Panc1 (cell line): ENCODE measurements at regions of chr22 and their contacts with region 1.

Region 1: DNA sequence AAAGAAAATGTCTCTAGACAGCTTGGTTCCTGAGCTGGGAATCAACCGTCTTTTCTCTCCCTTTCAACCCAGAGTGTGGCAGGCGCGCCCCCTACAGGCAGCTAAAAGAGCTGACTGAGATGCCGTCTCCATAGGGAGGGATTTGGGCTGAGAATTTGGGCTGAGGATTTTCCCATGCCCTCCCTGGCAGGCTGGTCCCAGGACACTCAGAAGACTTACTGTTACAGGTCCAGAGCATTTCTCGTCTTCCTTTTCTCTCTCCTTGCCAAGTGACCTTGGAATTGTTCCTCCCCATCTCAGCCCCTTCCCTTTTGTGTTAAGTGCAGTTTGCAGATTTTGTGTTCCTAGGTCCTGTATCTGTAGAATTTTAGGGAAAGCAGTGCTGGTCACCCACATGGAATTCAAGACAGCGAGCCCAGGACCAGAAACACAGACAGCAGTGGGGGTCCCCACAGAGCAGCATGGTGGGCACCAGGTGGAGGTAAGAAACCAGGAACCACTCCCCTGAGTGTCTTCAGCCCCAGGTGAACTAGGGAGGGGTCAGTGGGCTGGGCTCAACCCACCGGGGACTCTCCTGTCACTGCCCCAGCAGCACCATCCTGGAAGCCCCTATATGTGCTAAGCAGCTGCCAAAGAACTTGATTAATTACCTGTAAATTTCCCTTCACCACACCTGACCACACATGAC is 9.9 kb upstream of the IGLL5 start:
- DNase-seq: no peak
- ATAC-seq: peak; percentile 66; the same call in 1 of the 2 replicates
- H3K4me3 ChIP-seq: no peak overlapping the region
- H3K27ac ChIP-seq: no peak overlapping the region
- H3K4me1 ChIP-seq: no peaks in the 10 kb centered on the region
- H3K27me3 ChIP-seq: no peaks in the 10 kb centered on the region
- CTCF ChIP-seq: peak; percentile 87

Region 2: GRCh38 chr22:22770280-22770871 is 107.3 kb before region 1 on chr22:
- CTCF ChIA-PET with region 1: no interaction called
- POLR2A ChIA-PET with region 1: no interaction called
- in situ Hi-C with region 1: no loop called
- intact Hi-C with region 1: loop called (anchors 10 kb)
- DNase-seq: no peak
- ATAC-seq: peak; percentile 77; the same call in 1 of the 2 replicates
- H3K4me3 ChIP-seq: no peak overlapping the region
- H3K27ac ChIP-seq: no peak overlapping the region
- H3K4me1 ChIP-seq: no peaks in the 10 kb centered on the region
- H3K27me3 ChIP-seq: no peaks in the 10 kb centered on the region; the same call in 1 of the 2 replicates
- CTCF ChIP-seq: peak; percentile 82

Region 3: DNA sequence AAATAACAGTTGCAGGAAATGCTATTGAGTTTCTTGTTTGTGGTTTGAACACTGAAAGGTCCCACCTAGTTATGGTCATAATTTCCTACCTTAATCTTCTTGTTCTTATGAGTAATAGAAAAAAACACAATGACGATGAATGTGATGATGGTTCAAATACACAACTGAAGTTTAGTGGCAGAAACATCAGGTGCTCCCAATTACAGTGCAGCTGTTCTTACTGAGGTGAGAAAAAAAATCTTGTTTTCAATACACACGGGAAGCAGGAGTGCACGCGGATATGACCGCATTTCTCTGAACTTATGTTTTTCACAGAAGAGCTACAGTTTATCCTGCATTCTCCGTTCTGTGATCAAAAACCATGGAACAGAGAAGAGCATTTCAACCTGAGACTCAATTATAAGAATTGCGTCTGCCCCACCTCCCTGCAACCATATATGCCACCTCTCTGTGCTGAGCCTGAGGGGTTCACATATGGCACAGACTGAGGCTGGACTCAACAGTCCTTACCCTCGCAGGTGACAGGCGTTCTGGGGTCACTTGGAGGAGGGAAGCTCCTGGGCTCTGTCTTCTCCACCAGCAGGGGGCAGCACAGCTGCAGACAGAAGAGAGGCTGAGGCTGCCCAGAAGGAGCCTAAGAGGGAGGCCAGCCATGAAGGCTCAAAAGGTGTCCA is 89.7 kb before region 1 on chr22:
- CTCF ChIA-PET with region 1: interaction called, 12 read pairs
- POLR2A ChIA-PET with region 1: interaction called, 3 read pairs
- in situ Hi-C with region 1: no loop called
- intact Hi-C with region 1: no loop called
- DNase-seq: peak; percentile 25
- ATAC-seq: peak; percentile 91
- H3K4me3 ChIP-seq: no peak overlapping the region
- H3K27ac ChIP-seq: no peak overlapping the region
- H3K4me1 ChIP-seq: no peaks in the 10 kb centered on the region
- H3K27me3 ChIP-seq: peaks cover 4% of the 10 kb centered on the region
- CTCF ChIP-seq: peak; percentile 85